Uterus (tissue), 4 donors: ENCODE measurements at regions of chr19 and their contacts with region 1.

Region 1: GRCh38 chr19:52637718-52638585 is at the start of gene ZNF83:
- DNase-seq: peak; percentile 95 to 99
- H3K4me3 ChIP-seq: peak within 1 kb of the TSS; percentile 66 to 68
- H3K27ac ChIP-seq: peak within 1 kb of the TSS; percentile 83 to 85
- H3K4me1 ChIP-seq: no peaks in the 10 kb centered on the region
- H3K27me3 ChIP-seq: no peaks in the 10 kb centered on the region
- CTCF ChIP-seq: no peak
- POLR2A ChIP-seq: peak; percentile 24 to 41
- total RNA-seq, gene ZNF83: 40.6 to 481 (median 100) TPM

Region 2: DNA sequence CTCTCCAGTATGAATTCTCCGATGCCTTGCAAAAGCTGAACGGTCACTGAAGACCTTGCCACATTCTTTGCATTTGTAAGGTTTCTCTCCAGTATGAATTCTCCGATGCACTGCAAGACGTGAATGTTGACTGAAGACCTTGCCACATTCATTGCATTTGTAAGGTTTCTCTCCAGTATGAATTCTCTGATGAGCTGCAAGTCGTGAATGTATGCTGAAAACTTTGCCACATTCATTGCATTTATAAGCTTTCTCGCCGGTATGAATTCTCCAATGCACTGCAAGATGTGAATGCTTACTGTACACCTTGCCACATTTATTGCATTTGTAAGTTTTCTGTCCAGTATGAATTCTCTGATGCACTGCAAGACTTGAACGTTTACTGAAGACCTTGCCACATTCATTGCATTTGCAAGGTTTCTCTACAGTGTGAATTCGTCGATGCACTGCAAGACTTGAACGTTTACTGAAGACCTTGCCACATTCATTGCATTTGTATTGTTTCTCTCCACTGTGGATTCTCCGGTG is 522.4 kb before region 1 on chr19:
- intact Hi-C with region 1: no loop called
- DNase-seq: no peak
- H3K4me3 ChIP-seq: no peak overlapping the region
- H3K27ac ChIP-seq: no peak overlapping the region
- H3K4me1 ChIP-seq: no peaks in the 10 kb centered on the region
- H3K27me3 ChIP-seq: no peaks in the 10 kb centered on the region
- CTCF ChIP-seq: no peak
- POLR2A ChIP-seq: no peak

Region 3: DNA sequence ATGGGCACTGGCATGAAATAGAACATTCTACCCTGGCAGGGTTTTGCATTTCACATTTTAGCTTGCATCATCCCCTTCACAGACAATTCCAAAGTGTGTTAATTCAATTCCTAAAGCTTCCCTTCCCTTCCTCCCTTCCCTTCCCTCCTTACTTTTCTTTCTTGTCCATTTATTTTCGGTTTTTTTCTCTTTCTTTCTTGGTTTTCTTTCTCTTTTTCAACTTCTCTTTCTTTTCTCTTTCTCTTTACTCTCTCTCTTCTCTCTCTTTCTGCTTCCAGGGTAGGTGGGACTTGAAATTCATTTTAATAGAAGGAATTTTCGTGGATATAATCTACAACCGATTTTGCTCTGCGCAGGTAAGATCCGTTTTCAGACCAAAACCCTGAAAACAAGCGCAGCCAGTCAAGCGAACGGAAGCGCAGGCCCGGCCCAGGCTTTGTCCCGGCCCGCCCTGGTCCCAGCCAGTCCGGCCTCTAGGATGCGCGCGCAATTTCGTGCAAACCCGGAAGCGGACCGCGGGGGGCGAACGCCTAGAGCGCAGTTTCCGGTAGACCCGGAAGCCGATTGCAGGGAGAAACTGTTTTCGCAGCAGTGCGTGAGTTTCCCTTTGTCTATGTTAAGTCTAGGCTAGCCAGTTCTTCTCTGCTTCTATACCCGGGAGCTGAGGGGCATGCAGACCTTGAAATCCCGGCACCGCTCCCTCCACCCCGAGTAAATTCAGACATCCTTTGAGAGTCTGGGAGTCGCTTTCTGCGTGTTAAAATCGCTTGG is 240.5 kb before region 1 on chr19 and contains the start of gene ZNF528:
- intact Hi-C with region 1: loop called (anchors 5 kb)
- DNase-seq: peak; percentile 94 to 96
- H3K4me3 ChIP-seq: peak within 1 kb of the TSS; percentile 54 to 71
- H3K27ac ChIP-seq: peak within 1 kb of the TSS; percentile 44 to 68
- H3K4me1 ChIP-seq: no peaks in the 10 kb centered on the region
- H3K27me3 ChIP-seq: no peaks in the 10 kb centered on the region
- CTCF ChIP-seq: peak in 1 of 4 experiments; percentile 20
- POLR2A ChIP-seq: peak in 1 of 2 donors; percentile 55
- total RNA-seq, gene ZNF528: 6.2 to 80.7 (median 49.4) TPM

Region 4: GRCh38 chr19:53057904-53058580 is 420.1 kb after region 1 on chr19:
- intact Hi-C with region 1: no loop called
- DNase-seq: no peak
- H3K4me3 ChIP-seq: no peak overlapping the region
- H3K27ac ChIP-seq: no peak overlapping the region
- H3K4me1 ChIP-seq: no peaks in the 10 kb centered on the region
- H3K27me3 ChIP-seq: peaks cover 0 to 5% of the 10 kb centered on the region in 2 donors
- CTCF ChIP-seq: no peak
- POLR2A ChIP-seq: no peak